ENCODE measurements at regions of chr2 and their contacts with region 1.

Region 1: DNA sequence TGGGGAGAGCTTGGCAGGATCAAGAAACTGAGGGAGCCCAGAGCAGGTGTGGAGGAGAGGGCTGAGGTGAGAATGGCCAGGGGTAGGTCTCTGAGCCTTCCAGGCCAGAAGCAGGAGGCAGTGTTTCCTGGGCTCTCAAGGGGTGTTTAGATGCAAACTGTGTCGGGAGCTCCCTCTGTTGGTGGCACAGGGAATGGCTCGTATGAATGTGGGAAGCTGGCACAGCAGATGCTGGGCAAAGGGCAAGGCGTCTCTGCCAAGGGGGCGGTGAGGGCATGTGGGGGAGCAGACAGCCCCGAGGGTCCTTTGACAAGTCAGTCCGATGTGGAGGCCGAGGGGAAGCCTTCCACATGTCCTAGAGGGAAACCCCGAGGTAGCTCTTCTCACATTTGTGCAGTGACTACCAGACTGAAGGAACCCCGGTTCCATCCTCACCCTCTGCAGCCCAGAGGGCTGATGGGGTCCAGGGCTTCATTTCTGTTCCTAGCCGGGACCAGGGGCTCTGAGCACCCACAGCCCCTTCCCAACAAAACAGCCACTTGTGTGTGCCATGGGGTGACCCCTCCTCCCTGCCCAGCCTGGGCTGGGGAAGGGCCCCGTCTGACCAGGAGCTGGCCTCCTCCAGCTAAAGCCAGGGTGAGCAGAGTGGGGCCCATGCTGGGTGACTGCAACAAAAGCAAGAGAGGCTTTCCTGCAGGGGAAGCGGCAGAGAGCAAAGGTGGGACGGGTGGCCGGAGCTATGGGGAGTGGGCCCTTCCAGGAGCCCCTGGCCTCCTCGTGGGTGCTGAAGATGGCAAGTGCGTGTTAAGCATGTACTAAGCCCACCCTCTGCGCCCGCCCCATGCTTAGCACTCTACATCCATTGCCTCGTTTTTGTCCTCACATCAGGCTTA is 103.4 kb downstream of the SEPTIN10 start:
- DNase-seq: peak; percentile 77
- ATAC-seq: peak; percentile 53

Region 2: DNA sequence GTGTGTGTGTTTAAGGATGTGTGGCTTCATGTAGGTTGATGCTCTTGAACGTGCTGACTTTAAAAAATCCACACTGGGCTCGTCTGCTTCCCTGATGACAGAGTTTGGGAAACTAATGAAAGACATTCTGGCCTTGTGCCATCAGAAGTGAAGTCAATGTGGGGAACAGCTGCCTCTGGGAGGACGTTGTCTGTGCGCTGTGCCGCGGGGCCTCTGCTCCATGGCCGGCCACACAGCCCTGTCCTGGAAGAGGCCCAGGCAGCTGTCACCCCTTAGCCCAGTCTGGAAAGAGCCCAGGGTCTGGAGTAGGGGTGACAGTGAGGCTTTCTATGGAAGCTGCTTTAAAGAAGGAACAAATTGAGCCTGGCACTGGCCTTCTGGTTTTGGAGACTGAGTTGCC is 225.6 kb before region 1 on chr2:
- intact Hi-C with region 1: loop called (anchors 5 kb)
- DNase-seq: peak; percentile 81
- ATAC-seq: peak; percentile 87

Region 3: GRCh38 chr2:109382951-109383350 is 127.4 kb before region 1 on chr2:
- intact Hi-C with region 1: loop called (anchors 5 kb)
- DNase-seq: peak; percentile 77
- ATAC-seq: peak; percentile 92

Region 4: DNA sequence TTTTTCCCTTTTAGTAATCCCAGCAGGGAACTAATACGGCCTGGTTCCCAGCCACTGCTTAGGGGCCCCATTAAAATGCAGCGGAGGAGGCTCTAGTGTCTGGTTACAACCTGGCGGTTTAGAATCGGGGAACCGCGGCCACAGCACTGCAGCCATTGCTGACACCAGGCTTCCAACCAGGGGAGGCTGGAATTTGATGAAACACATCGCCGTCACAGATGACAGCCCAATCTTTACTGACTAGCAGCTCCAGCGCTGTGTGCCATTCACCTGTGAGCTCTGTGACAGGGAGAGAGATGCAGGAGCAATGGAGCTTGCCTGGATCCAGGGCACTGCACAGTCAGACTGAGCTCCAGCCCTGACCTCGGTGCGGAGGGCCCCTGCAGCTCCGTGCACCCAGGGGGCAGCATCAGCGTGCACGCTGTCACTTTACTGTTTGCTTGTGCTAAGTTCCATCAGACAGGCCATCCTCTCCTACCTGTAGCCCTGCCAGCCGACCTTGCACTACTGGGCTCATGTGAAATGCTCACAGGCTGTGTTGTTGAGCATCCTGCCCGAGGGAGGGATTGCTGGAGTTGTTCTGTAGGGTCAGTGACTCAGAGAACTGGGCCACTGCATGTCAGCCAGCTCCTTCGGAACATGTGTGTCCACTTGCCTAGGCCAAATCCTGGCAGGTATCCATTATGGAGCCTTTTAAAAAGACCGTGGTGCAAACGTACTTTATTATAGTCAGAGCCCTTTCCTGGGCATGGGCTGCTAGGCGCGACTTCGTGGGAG is 100.2 kb before region 1 on chr2:
- intact Hi-C with region 1: no loop called
- DNase-seq: no peak
- ATAC-seq: peak; percentile 34

Region 5: GRCh38 chr2:109715313-109715805 is 205.0 kb after region 1 on chr2:
- intact Hi-C with region 1: no loop called
- DNase-seq: no peak
- ATAC-seq: peak; percentile 85

Measured in Right ventricle myocardium inferior (tissue), 1 donor.